ENCODE measurements at regions of chr6 and their contacts with region 1.

Region 1: GRCh38 chr6:54083287-54083686 is 28.0 kb upstream of the MLIP start:
- DNase-seq: peak in 1 of 2 donors; percentile 65
- ATAC-seq: peak; percentile 33 to 60 (median 53)
- H3K4me3 ChIP-seq: peak overlapping the region; percentile 50
- H3K27ac ChIP-seq: peak overlapping the region; percentile 83
- H3K4me1 ChIP-seq: peaks cover 53% of the 10 kb centered on the region
- H3K27me3 ChIP-seq: no peaks in the 10 kb centered on the region
- CTCF ChIP-seq: no peak

Region 2: GRCh38 chr6:53771785-53772624 is 311.3 kb before region 1 on chr6:
- intact Hi-C with region 1: no loop called
- DNase-seq: no peak
- ATAC-seq: peak in 1 of 4 donors; percentile 62
- H3K4me3 ChIP-seq: no peak overlapping the region
- H3K27ac ChIP-seq: no peak overlapping the region
- H3K4me1 ChIP-seq: no peaks in the 10 kb centered on the region
- H3K27me3 ChIP-seq: no peaks in the 10 kb centered on the region
- CTCF ChIP-seq: no peak

Region 3: DNA sequence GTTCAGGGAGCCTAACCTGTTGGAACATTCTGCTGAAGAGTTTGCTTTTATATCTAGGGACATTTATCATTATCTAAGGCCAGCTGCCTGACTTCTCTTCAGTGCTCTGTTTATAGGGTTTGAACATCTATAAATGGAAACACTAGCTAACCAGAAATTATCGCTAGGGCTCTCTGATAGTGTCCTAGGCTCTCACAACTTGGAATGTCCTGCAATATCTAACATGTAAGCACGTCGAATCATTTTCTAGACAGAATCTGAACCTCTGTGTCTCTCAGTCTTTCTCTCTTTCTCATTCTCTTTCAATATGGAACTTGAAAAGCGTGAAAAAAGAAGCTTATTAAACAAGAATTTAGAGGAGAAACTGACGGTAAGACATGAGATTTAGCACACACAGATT is 64.6 kb before region 1 on chr6:
- intact Hi-C with region 1: loop called (anchors 5 to 10 kb)
- DNase-seq: no peak
- ATAC-seq: peak; percentile 85 to 91 (median 89)
- H3K4me3 ChIP-seq: peak overlapping the region; percentile 72
- H3K27ac ChIP-seq: peak overlapping the region; percentile 92
- H3K4me1 ChIP-seq: peaks cover 36% of the 10 kb centered on the region
- H3K27me3 ChIP-seq: no peaks in the 10 kb centered on the region
- CTCF ChIP-seq: no peak